B cell (primary cell): ENCODE measurements at regions of chr1 and their contacts with region 1.

Region 1: GRCh38 chr1:37449936-37450335 is 24.4 kb upstream of the ZC3H12A start:
- DNase-seq: peak; percentile 52
- ATAC-seq: peak; percentile 55
- H3K4me3 ChIP-seq: no peak overlapping the region
- H3K4me3 Mint-ChIP-seq: no peak overlapping the region
- H3K27ac ChIP-seq: no peak overlapping the region
- H3K27ac Mint-ChIP-seq: no peak overlapping the region
- H3K4me1 ChIP-seq: peaks cover 8 to 13% of the 10 kb centered on the region in 2 donors
- H3K4me1 Mint-ChIP-seq: peaks cover 10% of the 10 kb centered on the region
- H3K27me3 ChIP-seq: peaks cover 0 to 4% (median 0%) of the 10 kb centered on the region in 4 experiments
- H3K27me3 Mint-ChIP-seq: peaks cover 15% of the 10 kb centered on the region
- CTCF ChIP-seq: no peak

Region 2: DNA sequence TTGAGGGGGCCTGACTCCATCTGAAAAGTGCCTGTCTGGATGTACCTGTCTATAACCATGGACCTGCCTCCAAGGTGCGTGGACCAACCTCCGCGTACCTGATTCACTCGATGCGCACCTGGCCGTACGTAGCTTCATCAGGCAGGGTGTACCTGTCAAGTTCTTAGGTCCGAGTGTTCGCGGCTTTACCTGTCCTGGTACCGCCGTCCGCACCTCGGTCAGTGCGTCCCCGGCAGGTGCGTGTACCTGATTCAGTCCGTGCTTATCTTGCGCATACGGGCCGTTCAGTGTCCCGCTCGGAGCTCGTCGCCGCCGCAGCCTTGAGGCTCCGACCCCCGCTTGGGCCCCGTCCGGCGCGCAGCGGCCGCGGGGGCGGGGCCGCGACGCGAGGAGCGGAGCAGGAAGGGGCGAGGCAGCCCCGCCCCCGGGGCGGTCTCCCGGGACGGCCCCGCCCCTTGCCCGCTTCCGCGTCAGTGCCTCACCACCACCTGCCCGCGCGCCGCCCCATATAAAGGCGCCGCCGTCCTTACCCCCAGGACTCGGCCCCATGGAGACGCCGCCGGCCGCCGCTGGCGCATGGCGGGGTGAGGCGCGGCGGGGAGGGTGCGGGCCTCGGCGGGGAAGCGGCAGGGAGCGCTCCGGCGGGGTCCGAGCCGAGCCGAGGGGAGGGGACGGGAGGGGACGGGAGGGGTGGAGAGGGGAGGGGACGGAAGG is 24.3 kb after region 1 on chr1 and contains the start of gene ZC3H12A:
- CTCF ChIA-PET with region 1: interaction called, 690 read pairs
- POLR2A ChIA-PET with region 1: interaction called, 20 read pairs
- intact Hi-C with region 1: no loop called
- DNase-seq: peak; percentile 96
- ATAC-seq: peak; percentile 69
- H3K4me3 ChIP-seq: peak within 1 kb of the TSS; percentile 94 to 99 (median 98)
- H3K4me3 Mint-ChIP-seq: peak within 1 kb of the TSS; percentile 100
- H3K27ac ChIP-seq: peak within 1 kb of the TSS; percentile 96 to 97
- H3K27ac Mint-ChIP-seq: peak within 1 kb of the TSS; percentile 98
- H3K4me1 ChIP-seq: peaks cover 23 to 50% of the 10 kb centered on the region in 2 donors
- H3K4me1 Mint-ChIP-seq: peaks cover 51% of the 10 kb centered on the region
- H3K27me3 ChIP-seq: peaks cover 0 to 6% (median 0%) of the 10 kb centered on the region in 4 experiments
- H3K27me3 Mint-ChIP-seq: peaks cover 7% of the 10 kb centered on the region
- CTCF ChIP-seq: no peak
- total RNA-seq, gene ZC3H12A: 67.9 and 73.0 TPM in 2 replicates

Region 3: DNA sequence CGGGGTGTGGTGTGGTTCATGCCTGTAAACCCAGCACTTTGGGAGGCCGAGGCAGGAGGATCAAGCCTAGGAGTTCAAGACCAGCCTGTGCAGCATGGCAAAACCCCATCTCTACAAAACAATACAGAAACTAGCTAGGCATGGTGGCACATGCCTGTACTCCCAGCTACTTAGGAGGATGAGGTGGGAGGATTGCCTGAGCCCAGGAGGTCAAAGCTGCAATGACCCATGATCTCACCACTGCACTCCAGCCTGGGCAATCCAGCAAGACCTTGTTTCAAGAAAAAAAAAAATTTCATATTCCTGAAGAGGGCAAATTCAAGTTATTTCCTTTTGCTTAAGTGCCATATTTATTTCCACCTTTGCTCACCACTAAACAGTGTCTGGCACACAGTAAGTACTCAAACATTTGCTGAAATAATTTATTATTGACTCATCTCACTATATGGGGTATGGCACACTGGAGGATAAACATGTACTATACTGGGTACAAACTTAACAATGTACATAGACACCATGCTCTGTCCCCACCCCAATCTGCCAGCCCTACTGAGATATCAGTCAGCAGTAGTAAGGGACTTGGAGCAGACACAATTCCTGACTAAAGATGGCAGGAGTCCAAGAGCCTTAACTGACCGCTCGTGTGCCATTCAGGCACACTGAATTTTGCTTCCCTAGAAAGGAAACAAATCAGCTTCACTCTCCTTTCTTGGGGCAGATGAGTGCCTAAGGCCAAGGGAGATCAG is 49.1 kb after region 1 on chr1:
- CTCF ChIA-PET with region 1: interaction called, 25 read pairs
- POLR2A ChIA-PET with region 1: interaction called, 3 read pairs
- intact Hi-C with region 1: no loop called
- DNase-seq: no peak
- ATAC-seq: no peak
- H3K4me3 ChIP-seq: no peak overlapping the region
- H3K4me3 Mint-ChIP-seq: no peak overlapping the region
- H3K27ac ChIP-seq: no peak overlapping the region
- H3K27ac Mint-ChIP-seq: no peak overlapping the region
- H3K4me1 ChIP-seq: no peaks in the 10 kb centered on the region
- H3K4me1 Mint-ChIP-seq: no peaks in the 10 kb centered on the region
- H3K27me3 ChIP-seq: no peaks in the 10 kb centered on the region
- H3K27me3 Mint-ChIP-seq: no peaks in the 10 kb centered on the region
- CTCF ChIP-seq: no peak

Region 4: DNA sequence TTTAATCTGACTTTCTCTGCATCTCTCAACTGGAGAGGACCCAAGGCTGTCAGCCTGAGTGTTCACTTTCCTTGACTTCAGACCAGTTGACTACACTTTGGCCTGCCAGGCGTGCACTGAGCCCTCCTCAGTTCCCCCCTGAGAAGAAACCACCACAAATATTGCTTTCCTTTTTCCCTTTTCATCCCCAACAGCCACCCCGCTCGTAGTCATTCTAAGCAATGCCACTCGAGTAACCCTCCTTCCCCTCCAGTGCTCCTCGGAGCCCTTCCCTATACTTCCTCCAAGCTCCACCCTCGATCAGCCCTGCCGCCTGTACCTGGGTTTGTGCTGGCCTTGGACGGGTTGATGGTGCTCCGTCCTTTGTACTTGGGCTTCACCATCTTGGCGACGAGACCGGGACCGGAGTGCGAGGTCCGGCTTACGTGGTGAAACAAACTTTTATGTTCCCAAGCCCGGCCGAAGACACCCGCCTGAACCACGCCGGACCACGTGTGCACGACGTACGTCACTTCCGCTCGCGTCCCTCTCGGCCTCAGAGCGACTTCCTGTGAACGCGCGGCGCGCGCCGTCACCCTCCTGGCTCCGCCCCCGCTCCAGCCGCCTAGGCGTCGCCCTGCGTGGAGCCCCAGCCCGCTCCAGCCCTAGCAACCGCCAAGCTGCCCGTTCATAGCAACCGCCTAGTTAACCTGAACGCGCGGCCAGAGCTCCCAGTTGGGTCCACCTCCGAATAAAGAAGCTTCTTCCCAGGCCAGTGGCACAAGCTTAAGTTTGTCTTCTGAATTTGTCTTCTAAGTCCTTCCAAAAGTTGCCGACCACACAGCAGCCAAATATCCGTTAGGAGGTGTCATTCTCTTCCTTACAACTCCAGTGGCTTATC is 145.7 kb after region 1 on chr1 and contains the start of gene GNL2:
- CTCF ChIA-PET with region 1: no interaction called
- POLR2A ChIA-PET with region 1: no interaction called
- intact Hi-C with region 1: no loop called
- DNase-seq: peak; percentile 99
- ATAC-seq: peak; percentile 98
- H3K4me3 ChIP-seq: peak within 1 kb of the TSS; percentile 67 to 96 (median 92)
- H3K4me3 Mint-ChIP-seq: peak within 1 kb of the TSS; percentile 99
- H3K27ac ChIP-seq: peak within 1 kb of the TSS; percentile 77 to 90
- H3K27ac Mint-ChIP-seq: peak within 1 kb of the TSS; percentile 93
- H3K4me1 ChIP-seq: peaks cover 16 to 20% of the 10 kb centered on the region in 2 donors
- H3K4me1 Mint-ChIP-seq: peaks cover 26% of the 10 kb centered on the region
- H3K27me3 ChIP-seq: peaks cover 0 to 3% (median 0%) of the 10 kb centered on the region in 4 experiments
- H3K27me3 Mint-ChIP-seq: no peaks in the 10 kb centered on the region
- CTCF ChIP-seq: no peak
- total RNA-seq, gene GNL2: 44.0 and 50.6 TPM in 2 replicates